PC-9 (cell line): ENCODE measurements at regions of chr11 and their contacts with region 1.

Region 1: GRCh38 chr11:114762408-114762807 is 84.1 kb downstream of the NXPE2 start:
- DNase-seq: peak in 1 of 2 experiments; percentile 15
- H3K4me3 ChIP-seq: no peak overlapping the region
- H3K27ac ChIP-seq: no peak overlapping the region
- H3K4me1 ChIP-seq: no peaks in the 10 kb centered on the region
- H3K27me3 ChIP-seq: no peaks in the 10 kb centered on the region
- CTCF ChIP-seq: peak; percentile 61

Region 2: DNA sequence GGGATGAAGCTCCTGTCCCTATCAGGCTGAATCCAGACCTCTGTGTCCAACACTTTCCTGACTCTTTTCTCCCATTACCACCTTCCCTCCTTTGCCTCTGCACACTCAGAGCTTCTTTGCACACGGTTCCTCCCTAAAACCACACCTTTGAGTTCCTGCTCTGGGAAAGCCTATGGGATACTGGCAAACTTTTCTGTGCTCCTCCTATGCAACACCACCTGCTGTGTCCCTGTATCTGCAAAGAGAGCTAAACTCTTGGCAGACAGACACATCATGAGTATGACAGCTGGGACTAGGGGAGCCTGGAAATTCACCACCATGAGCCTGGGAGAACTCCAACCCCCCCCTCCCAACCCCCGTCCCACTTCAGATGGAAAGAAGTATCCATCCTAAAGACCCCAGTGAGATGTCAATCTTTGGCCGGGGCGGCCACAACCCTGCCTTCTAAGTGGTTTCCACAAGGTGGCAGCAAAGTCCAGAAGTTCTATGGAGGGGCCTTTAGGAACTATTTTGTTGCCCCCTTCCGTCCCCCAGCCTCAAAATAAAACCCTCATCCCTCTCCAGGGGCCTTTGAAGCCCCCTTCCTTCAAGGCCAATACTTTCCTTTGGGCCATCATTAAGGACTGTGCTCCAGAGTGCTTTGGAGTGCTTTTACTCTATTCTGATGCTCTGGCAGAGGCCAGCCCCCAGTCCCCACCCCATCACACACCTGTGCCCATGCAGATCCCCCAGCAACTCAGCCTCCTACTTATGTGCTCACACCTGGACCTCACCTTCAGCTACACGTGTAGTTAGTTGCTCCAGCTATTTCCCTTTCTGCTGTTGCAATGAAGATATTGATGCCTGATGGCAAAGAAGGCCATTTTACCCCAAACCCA is 768.1 kb before region 1 on chr11:
- CTCF ChIA-PET with region 1: no interaction called
- POLR2A ChIA-PET with region 1: no interaction called
- intact Hi-C with region 1: loop called (anchors 5 kb)
- DNase-seq: no peak
- H3K4me3 ChIP-seq: no peak overlapping the region
- H3K27ac ChIP-seq: no peak overlapping the region
- H3K4me1 ChIP-seq: no peaks in the 10 kb centered on the region
- H3K27me3 ChIP-seq: peaks cover 48% of the 10 kb centered on the region
- CTCF ChIP-seq: peak; percentile 86

Region 3: GRCh38 chr11:114340311-114341131 is 421.9 kb before region 1 on chr11:
- CTCF ChIA-PET with region 1: no interaction called
- POLR2A ChIA-PET with region 1: no interaction called
- intact Hi-C with region 1: loop called (anchors 1 kb)
- DNase-seq: peak; percentile 38 to 74
- H3K4me3 ChIP-seq: no peak overlapping the region
- H3K27ac ChIP-seq: no peak overlapping the region
- H3K4me1 ChIP-seq: no peaks in the 10 kb centered on the region
- H3K27me3 ChIP-seq: peaks cover 18% of the 10 kb centered on the region
- CTCF ChIP-seq: peak; percentile 94

Region 4: DNA sequence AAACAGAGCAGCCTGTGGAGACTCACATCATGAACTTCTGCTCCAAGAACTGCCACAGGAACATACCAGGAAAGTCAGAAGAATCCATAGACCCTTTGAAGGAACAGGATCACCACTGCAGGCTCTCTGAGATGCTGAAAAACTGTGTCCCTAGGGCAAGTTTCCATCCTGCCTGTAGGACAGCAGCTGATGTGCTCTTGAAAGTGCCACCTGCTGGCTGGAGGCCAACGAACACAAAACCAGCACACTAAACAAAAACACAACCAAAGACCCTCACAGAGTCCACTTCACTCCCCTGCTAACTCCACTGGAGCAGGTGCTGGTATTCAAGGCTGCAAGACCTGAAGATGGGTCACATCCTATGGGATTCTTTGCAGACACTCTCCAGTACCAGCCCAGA is 190.7 kb before region 1 on chr11:
- CTCF ChIA-PET with region 1: interaction called, 12 read pairs
- POLR2A ChIA-PET with region 1: no interaction called
- intact Hi-C with region 1: no loop called
- DNase-seq: no peak
- H3K4me3 ChIP-seq: no peak overlapping the region
- H3K27ac ChIP-seq: no peak overlapping the region
- H3K4me1 ChIP-seq: no peaks in the 10 kb centered on the region
- H3K27me3 ChIP-seq: no peaks in the 10 kb centered on the region
- CTCF ChIP-seq: no peak

Region 5: DNA sequence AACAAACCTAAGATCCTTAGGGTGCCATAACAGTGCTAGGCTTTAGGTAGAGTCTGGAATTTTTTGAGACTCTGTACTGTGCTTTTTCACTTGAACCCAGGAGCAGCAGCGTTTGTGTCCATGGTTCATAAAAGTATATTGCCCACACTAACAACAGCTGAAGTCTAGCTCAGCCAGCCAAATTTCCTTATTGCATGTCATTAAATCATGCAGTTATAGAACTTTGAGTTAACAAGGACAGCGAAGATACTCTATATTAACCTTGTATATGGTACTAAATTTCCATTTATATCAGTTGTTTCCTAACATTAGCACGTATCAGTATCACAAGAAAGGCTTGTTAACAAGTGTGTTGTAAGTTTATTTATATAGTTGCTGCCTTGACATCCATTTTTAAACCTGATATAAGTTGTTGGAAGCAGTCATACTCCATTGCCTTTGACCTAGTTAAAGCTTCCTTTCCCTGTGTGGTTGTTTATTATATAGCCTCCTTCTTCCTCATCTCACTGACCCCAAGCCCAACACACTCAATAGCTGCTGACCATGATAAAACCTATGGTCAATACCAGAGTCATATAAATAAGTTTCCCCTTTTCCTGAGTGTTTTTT is 37.4 kb before region 1 on chr11:
- CTCF ChIA-PET with region 1: no interaction called
- POLR2A ChIA-PET with region 1: no interaction called
- intact Hi-C with region 1: no loop called
- DNase-seq: no peak
- H3K4me3 ChIP-seq: no peak overlapping the region
- H3K27ac ChIP-seq: no peak overlapping the region
- H3K4me1 ChIP-seq: no peaks in the 10 kb centered on the region
- H3K27me3 ChIP-seq: no peaks in the 10 kb centered on the region
- CTCF ChIP-seq: no peak

Region 6: GRCh38 chr11:115201111-115201792 is 438.8 kb after region 1 on chr11:
- CTCF ChIA-PET with region 1: no interaction called
- POLR2A ChIA-PET with region 1: no interaction called
- intact Hi-C with region 1: no loop called
- DNase-seq: no peak
- H3K4me3 ChIP-seq: no peak overlapping the region
- H3K27ac ChIP-seq: no peak overlapping the region
- H3K4me1 ChIP-seq: no peaks in the 10 kb centered on the region
- H3K27me3 ChIP-seq: peaks cover 34% of the 10 kb centered on the region
- CTCF ChIP-seq: no peak